Cardiac septum (tissue), 1 donor: ENCODE measurements at regions of chr10 and their contacts with region 1.

Region 1: DNA sequence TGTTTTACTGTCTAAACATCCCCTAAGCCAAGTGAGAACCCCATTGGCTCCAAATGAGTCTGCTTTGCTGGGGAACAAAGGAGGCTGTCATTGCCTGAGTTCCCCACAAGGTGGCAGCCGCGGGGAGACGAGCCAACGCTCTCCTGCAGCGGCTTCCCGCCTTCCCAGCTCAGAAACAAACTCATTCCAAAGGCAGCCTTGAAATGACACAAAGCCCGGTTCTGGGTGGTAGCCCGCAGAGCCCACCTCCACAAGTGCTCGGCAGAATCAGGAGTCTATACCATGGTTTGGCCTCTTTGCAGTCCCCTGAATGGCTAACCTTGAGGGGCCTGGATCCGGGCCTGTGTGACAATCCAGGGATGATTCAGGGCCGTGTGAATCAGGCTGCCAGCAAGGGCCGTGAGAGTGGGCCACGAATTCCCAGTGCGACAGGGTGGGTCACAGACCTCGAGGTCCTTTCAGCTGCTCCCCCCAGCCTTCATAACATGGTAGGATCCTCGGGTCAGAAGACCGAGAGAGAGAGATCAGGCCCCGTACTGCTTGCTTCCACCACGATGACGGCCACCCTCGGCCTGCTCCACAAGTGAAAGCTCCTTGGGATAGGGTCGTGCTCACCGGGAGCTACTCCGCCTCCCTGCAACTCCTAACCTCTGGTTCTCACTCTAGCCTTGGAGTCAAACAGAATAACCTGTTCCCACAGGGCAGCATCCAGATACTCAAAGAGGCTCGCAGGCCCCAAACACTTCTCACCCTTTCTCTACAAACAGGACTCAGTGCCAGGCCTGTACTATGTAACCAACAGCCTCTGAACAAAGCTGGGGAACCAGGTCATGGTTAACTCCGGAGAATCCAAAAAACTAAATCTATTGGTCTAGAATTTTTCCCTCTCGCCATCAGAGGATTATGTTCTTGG is 79.6 kb downstream of the DLG5 start:
- DNase-seq: peak; percentile 91

Region 2: DNA sequence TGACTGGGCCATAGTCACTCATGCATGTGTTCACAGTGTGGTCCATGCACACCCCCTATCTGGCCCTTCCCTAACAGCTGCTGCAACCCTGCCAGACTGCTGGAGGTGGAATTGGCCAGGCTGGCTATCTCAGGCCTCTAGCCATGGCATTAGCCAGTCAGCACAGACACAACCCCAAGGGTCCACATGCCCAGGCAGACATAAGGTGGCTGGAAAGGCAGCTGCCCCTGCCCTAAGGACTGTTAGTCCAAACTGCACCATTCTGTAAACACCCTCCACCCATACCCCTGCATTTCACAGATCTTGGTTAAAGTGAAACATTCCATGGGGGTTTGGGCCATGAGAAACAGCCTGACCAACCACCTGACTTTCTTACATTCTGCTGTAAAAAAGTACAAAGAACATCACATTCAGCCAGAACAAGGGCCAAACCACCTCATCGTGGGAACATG is 72.0 kb before region 1 on chr10:
- intact Hi-C with region 1: no loop called
- DNase-seq: no peak

Region 3: DNA sequence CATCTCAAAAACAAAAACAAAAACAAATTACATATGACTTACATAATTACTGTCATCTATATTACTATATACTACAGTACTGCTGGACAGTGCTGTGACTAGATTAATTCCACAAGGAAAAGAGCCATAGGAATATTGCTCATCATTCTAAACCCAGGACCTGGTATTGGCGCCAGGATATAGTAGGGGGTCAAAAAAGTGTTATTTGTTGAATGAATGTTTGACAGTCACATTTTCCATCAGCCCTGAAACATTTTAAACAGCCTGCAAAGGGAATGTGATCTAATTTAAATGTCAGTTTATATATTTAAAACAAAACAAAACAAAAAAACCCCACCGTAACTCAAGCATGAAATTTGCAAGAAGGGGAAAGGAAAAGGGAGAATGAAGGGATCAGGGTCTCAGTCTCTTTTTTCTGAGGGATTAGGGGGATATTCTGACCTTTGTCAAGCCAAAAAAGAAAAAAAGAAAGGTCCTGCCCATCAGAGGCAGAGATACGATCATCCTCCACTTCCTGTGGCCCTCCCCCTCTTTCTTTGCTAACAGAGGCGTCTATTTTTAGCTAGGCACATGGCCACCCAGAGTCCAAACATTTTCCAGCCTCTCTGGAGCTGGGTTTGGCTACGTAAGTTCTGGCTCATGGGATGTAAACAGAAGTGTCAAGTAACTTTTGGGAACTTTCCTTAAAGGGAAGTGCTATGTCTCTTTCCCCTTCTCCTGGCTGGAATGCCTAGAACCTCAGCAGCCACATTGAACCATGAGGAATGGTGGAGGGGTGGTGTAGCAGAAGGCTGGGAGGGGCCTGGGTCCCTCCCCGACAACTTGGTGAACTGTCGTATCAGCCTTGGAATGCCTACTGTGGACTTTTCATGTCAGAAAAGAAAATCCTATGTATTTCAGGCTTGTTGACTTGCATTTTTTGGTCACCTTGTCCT is 124.2 kb after region 1 on chr10:
- intact Hi-C with region 1: loop called (anchors 5 kb)
- DNase-seq: no peak

Region 4: DNA sequence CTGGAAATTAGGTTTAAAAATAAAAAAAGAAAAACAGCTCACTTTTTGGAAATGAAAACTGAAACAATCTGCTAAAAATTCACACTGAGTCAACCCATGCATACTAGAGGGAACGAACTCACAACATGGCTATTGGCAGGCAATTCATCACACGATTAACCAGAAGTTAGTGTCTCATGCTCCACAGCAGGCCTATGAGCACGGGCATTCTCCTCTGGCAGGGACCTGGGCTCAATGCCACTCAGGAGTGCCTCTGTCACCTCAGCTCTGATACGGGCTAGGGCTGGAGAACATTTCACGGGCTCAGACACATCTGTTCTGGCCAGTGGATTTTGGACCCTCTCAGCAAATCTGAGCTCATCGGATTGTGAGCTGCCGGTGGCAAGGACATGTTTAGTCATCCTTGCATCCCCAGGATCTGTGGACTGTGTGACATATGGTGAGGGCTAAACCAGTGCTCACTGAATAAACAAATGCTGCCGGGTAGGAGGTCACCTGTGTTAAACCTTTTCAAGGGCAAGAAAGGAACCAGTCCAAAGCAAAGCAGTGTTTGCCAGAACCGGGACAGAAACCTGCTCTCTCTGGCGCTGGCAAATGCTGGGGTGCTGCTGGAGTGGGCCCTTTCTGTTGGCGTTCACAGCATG is 142.2 kb after region 1 on chr10:
- intact Hi-C with region 1: loop called (anchors 5 kb)
- DNase-seq: peak; percentile 74

Region 5: GRCh38 chr10:78004215-78005026 is 157.4 kb after region 1 on chr10:
- intact Hi-C with region 1: loop called (anchors 2 kb)
- DNase-seq: no peak

Region 6: GRCh38 chr10:78312197-78313047 is 465.4 kb after region 1 on chr10:
- intact Hi-C with region 1: no loop called
- DNase-seq: peak; percentile 56